Sigmoid colon (tissue), 7 donors: ENCODE measurements at regions of chr18 and their contacts with region 1.

Region 1: DNA sequence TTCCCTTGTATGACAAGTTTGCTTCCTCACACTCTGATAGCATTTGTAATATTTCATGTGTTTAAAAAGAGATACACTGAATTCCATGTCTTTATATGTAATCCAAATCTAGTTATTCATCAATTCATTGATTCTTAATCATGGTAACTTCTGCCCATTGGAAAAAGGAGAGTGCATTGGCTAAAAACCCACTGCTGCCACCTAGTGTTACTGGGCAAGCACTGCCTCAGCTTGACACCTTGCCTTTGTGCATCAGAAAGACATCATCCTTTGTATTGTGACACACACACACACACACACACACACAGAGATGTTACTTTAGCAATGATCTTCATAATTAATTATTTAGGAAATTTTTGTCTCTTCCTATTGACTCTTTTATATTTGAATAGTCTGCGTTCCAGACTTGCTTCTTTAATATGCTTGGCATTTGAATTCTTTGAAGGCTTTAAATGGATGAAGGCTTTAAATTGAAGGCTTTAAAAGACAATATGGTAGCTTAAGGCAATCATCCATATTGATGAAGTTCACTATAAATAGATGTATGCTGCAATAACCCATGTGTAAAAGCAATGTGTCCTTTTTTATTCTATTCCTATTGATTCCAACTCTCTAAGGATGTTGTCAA is 414.2 kb upstream of the CHST9 start:
- DNase-seq: no peak
- H3K4me3 ChIP-seq: no peak overlapping the region
- H3K27ac ChIP-seq: no peak overlapping the region
- H3K4me1 ChIP-seq: no peaks in the 10 kb centered on the region
- H3K27me3 ChIP-seq: no peaks in the 10 kb centered on the region
- CTCF ChIP-seq: peak in 3 of 4 experiments; percentile 68 to 77 (median 70)
- EP300 ChIP-seq: no peak
- POLR2A ChIP-seq: no peak

Region 2: DNA sequence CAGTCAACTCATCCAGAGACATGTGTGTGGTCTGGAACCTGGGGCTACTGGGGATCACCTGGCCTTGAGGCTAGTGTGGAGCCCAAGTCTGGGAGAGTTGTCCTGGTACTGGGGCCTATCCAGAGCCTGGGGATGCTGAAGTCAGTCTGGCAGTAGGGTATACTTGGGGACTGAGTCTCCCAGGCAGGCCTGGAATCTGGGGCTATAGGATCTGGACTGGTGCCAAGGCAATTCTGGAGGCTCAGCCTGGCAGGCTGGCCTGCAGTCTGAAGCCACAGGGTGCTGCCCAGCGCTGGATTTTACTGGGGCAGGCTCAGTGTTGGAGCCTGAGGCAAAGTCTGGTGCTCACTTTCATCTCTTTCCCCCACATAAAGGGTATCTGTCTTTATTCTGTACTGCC is 780.3 kb before region 1 on chr18:
- intact Hi-C with region 1: loop called (anchors 5 kb)
- DNase-seq: no peak
- H3K4me3 ChIP-seq: no peak overlapping the region
- H3K27ac ChIP-seq: no peak overlapping the region
- H3K4me1 ChIP-seq: no peaks in the 10 kb centered on the region
- H3K27me3 ChIP-seq: no peaks in the 10 kb centered on the region
- CTCF ChIP-seq: no peak
- EP300 ChIP-seq: no peak
- POLR2A ChIP-seq: no peak

Region 3: GRCh38 chr18:27652480-27653121 is 53.3 kb after region 1 on chr18:
- intact Hi-C with region 1: no loop called
- DNase-seq: no peak
- H3K4me3 ChIP-seq: no peak overlapping the region
- H3K27ac ChIP-seq: no peak overlapping the region
- H3K4me1 ChIP-seq: no peaks in the 10 kb centered on the region
- H3K27me3 ChIP-seq: no peaks in the 10 kb centered on the region
- CTCF ChIP-seq: no peak
- EP300 ChIP-seq: no peak
- POLR2A ChIP-seq: no peak